Mammary epithelial cell (primary cell): ENCODE measurements at regions of chr20 and their contacts with region 1.

Region 1: DNA sequence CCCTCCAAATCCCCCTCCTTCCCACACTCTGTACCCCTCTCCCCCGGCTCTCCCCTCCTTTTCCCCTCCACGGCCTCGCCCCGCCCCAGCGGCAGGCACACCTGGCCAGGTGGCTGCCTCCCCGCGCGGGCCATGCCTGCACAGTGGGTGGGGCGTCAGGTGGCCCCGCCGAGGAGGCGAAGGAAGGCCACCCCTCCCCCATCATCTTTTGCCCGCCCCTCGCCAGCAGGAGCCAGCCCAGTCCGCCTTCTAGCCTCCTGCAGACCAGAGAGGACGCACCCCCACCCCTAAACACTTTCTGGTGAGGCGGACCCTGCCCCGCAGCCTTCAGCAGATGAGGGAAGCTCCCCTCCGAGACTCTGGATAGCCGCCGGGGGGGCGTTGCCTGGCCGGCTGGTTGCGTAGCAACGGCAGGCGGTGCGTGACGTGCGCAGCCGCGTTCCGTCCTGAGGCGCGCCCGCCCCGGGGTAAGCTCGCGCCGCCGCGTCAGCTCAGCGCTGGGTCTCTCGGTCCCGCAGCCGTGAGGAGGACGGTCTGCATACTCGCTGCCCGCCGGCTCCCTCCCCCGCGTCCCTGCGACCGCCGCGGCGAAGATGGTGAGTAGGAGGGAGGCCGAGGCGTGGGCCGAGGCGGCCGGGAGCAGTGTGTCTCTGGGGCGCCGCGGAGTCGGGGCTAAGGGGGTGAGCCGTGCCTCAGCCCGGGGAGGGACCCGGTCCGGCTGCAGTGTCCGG is at the start of gene DSTN:
- DNase-seq: peak; percentile 95
- H3K4me3 ChIP-seq: peak within 1 kb of the TSS; percentile 95 to 99 (median 95)
- H3K27ac ChIP-seq: peak within 1 kb of the TSS; percentile 97
- H3K4me1 ChIP-seq: peaks cover 38% of the 10 kb centered on the region
- H3K27me3 ChIP-seq: no peaks in the 10 kb centered on the region
- CTCF ChIP-seq: no peak
- total RNA-seq, gene DSTN: 398 to 428 TPM

Region 2: DNA sequence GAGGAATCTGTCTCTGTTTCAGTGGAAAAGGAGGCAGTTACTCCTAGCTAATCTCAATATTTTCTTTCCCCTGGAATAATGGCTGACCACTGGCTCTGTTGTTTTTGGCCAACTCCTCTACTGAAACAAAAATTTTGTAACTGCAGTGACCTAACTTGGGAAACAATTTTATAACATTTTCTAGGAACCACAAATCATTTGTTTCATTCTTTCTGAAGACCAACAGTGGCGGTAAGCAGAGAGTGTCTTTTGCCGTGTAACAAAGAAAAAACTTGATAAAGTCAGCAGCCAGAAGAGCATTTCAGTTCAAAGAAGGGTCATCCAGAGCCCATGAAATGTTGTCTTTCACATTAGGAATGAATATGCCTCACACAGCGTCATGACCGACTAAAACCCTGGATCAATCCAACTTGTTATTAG is 26.8 kb before region 1 on chr20:
- CTCF ChIA-PET with region 1: interaction called, 3 read pairs
- dilution Hi-C with region 1: no loop called
- in situ Hi-C with region 1: no loop called
- intact Hi-C with region 1: loop called (anchors 1 kb)
- DNase-seq: peak; percentile 52
- H3K4me3 ChIP-seq: no peak overlapping the region
- H3K27ac ChIP-seq: peak overlapping the region; percentile 32
- H3K4me1 ChIP-seq: peaks cover 18% of the 10 kb centered on the region
- H3K27me3 ChIP-seq: no peaks in the 10 kb centered on the region
- CTCF ChIP-seq: no peak

Region 3: GRCh38 chr20:17558154-17558940 is 11.4 kb before region 1 on chr20:
- CTCF ChIA-PET with region 1: no interaction called
- dilution Hi-C with region 1: no loop called
- in situ Hi-C with region 1: no loop called
- intact Hi-C with region 1: loop called (anchors 1 kb)
- DNase-seq: peak; percentile 88
- H3K4me3 ChIP-seq: peak overlapping the region; percentile 31 to 44 (median 37)
- H3K27ac ChIP-seq: peak overlapping the region; percentile 100
- H3K4me1 ChIP-seq: peaks cover 41% of the 10 kb centered on the region
- H3K27me3 ChIP-seq: no peaks in the 10 kb centered on the region
- CTCF ChIP-seq: no peak

Region 4: DNA sequence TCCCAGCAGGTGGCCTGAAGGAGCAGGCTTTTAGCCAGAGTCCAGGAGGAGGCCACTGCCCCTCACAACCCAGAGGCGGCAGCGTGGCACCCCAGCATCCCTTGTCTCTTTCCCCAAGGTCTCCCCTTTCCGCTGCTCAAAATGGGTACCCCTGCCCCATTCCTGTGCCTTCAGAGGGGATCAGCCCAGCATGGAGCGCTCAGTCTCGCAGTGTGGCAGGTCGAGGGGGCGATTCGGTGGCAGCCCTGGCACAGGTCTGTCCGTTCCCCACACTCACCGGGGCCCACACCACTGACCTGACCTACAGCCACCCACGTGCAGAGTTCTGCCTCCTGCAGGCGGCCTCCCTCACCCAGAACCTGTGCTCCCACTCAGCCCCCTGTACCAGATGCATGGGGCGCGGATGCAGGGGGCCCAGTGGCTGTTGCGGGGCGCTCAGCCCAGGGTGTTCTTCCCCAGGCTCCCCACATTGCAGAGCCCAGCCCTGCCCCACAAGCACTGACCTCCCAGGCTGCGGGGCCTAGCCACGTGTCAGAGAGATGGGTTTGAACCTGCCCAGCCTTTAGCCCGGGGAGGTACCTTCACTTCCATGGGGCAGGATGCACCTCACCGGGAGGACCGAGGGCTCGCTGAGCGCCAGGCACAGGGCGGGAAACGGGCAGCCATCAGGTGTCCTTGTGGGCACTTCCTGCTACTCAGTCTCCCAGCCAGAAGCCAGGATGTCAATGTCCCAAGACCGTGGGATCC is 41.9 kb after region 1 on chr20:
- CTCF ChIA-PET with region 1: no interaction called
- dilution Hi-C with region 1: no loop called
- in situ Hi-C with region 1: no loop called
- intact Hi-C with region 1: loop called (anchors 2 kb)
- DNase-seq: peak; percentile 70
- H3K4me3 ChIP-seq: no peak overlapping the region
- H3K27ac ChIP-seq: no peak overlapping the region
- H3K4me1 ChIP-seq: peaks cover 29% of the 10 kb centered on the region
- H3K27me3 ChIP-seq: no peaks in the 10 kb centered on the region
- CTCF ChIP-seq: peak in 1 of 2 donors; percentile 75